K562 (cell line): ENCODE measurements at regions of chr15 and their contacts with region 1.

Region 1: DNA sequence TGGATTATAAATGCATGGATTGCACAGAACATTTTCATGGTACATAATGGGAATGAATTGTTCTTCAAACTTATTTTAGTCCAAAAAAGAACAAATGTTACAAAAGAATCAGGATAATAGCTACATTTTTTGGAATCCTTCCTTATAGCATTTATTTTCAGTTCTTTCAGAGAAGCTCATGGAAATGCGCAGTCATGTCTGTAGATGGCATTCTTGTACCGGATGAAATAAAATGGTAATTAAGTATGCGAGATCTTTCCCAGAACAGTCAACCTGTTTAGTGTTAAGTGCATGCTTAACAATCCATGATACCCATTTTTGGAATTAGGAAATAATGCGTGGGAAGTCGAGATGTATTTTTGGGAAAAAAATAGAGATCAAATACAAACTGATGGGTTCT is 38.2 kb upstream of the GOLGA8B start:
- DNase-seq: peak in 3 of 4 experiments; percentile 9 to 78 (median 39)
- ATAC-seq: peak; percentile 90
- H3K4me3 ChIP-seq: no peak overlapping the region
- H3K27ac ChIP-seq: no peak overlapping the region
- H3K4me1 ChIP-seq: peaks cover 0 to 10% of the 10 kb centered on the region in 2 experiments; a peak in 4 of 5 replicates
- H3K27me3 ChIP-seq: no peaks in the 10 kb centered on the region
- CTCF ChIP-seq: peak; percentile 46 to 80 (median 66); a peak in 5 of 6 replicates
- EP300 ChIP-seq: no peak
- POLR2A ChIP-seq: no peak
- RAD21 ChIP-seq: peak; percentile 74 to 89

Region 2: GRCh38 chr15:34655326-34655725 is 33.7 kb after region 1 on chr15:
- CTCF ChIA-PET with region 1: no interaction called
- POLR2A ChIA-PET with region 1: interaction called, 3 read pairs
- in situ Hi-C with region 1: no loop called
- intact Hi-C with region 1: loop called (anchors 2 kb)
- DNase-seq: peak; percentile 54 to 77 (median 56)
- ATAC-seq: peak; percentile 42
- H3K4me3 ChIP-seq: no peak overlapping the region
- H3K27ac ChIP-seq: peak overlapping the region; percentile 70
- H3K4me1 ChIP-seq: peaks cover 15 to 62% of the 10 kb centered on the region in 2 experiments
- H3K27me3 ChIP-seq: no peaks in the 10 kb centered on the region
- CTCF ChIP-seq: no peak
- EP300 ChIP-seq: peak; percentile 92
- POLR2A ChIP-seq: no peak; the same call in 1 of the 2 replicates
- RAD21 ChIP-seq: 0 out of 4 replicates have a peak, but pooled peaks of 1 of the 2 experiments have one; percentile 10

Region 3: GRCh38 chr15:34708422-34708821 is 86.7 kb after region 1 on chr15:
- CTCF ChIA-PET with region 1: no interaction called
- POLR2A ChIA-PET with region 1: no interaction called
- in situ Hi-C with region 1: no loop called
- intact Hi-C with region 1: loop called (anchors 5 kb)
- DNase-seq: peak; percentile 50 to 78 (median 64)
- ATAC-seq: peak; percentile 95
- H3K4me3 ChIP-seq: no peak overlapping the region
- H3K27ac ChIP-seq: no peak overlapping the region
- H3K4me1 ChIP-seq: peaks cover 2 to 11% of the 10 kb centered on the region in 2 experiments; a peak in 4 of 5 replicates
- H3K27me3 ChIP-seq: no peaks in the 10 kb centered on the region
- CTCF ChIP-seq: peak; percentile 70 to 91 (median 90)
- EP300 ChIP-seq: no peak
- POLR2A ChIP-seq: no peak
- RAD21 ChIP-seq: peak; percentile 77 to 89

Region 4: DNA sequence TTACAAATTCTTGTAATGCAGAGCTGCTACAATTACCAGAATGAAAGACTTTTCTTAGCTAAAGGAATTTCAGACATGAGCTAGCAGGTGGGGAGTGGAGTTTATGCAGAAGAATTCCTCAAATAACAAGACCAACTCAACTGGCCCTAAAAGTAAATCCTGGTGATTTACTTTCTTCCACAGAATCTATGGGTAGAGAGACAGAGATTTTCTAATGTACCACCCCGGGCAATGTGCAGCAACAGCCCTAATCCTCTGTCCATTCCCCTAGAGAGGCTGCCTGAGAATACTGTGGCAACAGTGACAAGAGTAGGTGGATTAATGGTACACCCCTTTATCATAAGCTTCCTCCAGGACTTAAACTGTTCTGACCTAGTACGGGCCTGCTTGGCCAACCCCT is 292.6 kb after region 1 on chr15:
- CTCF ChIA-PET with region 1: interaction called, 28 read pairs
- POLR2A ChIA-PET with region 1: no interaction called
- in situ Hi-C with region 1: loop called (anchors 5 kb)
- intact Hi-C with region 1: no loop called
- DNase-seq: no peak
- ATAC-seq: no peak
- H3K4me3 ChIP-seq: no peak overlapping the region
- H3K27ac ChIP-seq: no peak overlapping the region
- H3K4me1 ChIP-seq: no peaks in the 10 kb centered on the region
- H3K27me3 ChIP-seq: no peaks in the 10 kb centered on the region
- CTCF ChIP-seq: no peak
- EP300 ChIP-seq: no peak
- POLR2A ChIP-seq: no peak
- RAD21 ChIP-seq: no peak

Region 5: DNA sequence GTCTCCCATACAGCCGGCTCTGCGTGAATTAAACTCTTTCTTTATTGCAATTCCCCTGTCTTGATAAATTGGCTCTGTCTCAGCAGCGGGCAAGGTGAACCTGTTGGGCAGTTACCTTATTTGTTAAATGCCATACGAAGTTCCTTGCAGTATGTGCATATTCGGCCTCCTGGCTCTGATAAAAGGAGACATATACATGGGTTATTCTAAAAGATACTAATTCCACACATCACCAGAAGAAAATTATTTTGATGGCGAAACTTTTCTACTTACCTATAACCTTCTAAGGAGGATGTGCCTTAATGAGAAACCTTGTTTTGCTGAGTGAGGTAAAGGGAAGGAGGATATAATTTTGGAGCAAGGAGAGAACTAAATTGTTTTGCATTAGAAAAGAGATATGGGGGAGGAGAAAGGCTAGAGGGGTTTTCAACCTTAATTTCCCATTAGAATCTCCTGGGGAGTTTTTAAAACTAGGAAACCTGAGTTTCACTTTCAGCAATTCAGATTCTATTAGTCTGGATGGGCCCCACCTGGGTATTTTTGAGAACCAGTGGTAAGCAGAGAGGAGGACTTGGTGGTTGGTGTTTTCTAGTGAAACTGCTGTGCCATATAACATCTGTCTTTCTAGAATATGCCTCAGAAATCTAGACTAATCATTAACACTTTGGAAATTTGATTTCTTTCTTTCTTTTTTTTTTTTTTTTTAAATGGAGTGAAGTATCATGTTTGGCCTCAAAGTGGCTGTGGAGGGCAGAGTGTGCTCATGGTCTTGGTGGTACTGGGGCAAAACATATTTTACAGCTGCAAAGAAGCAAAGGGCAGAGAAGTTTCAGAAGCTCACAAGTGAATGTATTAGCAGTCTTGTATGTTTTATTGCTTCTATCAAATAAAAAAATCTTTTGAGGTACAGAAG is 440.4 kb after region 1 on chr15:
- CTCF ChIA-PET with region 1: no interaction called
- POLR2A ChIA-PET with region 1: no interaction called
- in situ Hi-C with region 1: no loop called
- intact Hi-C with region 1: loop called (anchors 10 kb)
- DNase-seq: no peak
- ATAC-seq: no peak
- H3K4me3 ChIP-seq: no peak overlapping the region
- H3K27ac ChIP-seq: no peak overlapping the region
- H3K4me1 ChIP-seq: peaks cover 0 to 3% of the 10 kb centered on the region in 2 experiments; a peak in 2 of 5 replicates
- H3K27me3 ChIP-seq: no peaks in the 10 kb centered on the region
- CTCF ChIP-seq: no peak
- EP300 ChIP-seq: no peak
- POLR2A ChIP-seq: no peak
- RAD21 ChIP-seq: no peak

Region 6: GRCh38 chr15:35444557-35445204 is 823.0 kb after region 1 on chr15:
- CTCF ChIA-PET with region 1: no interaction called
- POLR2A ChIA-PET with region 1: no interaction called
- in situ Hi-C with region 1: no loop called
- intact Hi-C with region 1: loop called (anchors 5 kb)
- DNase-seq: peak; percentile 28 to 60 (median 38)
- ATAC-seq: peak; percentile 65
- H3K4me3 ChIP-seq: no peak overlapping the region
- H3K27ac ChIP-seq: no peak overlapping the region
- H3K4me1 ChIP-seq: no peaks in the 10 kb centered on the region
- H3K27me3 ChIP-seq: no peaks in the 10 kb centered on the region
- CTCF ChIP-seq: peak; percentile 73 to 92 (median 77)
- EP300 ChIP-seq: no peak
- POLR2A ChIP-seq: no peak
- RAD21 ChIP-seq: peak; percentile 90 to 92